Aorta (tissue), 5 donors: ENCODE measurements at regions of chr3 and their contacts with region 1.

Region 1: DNA sequence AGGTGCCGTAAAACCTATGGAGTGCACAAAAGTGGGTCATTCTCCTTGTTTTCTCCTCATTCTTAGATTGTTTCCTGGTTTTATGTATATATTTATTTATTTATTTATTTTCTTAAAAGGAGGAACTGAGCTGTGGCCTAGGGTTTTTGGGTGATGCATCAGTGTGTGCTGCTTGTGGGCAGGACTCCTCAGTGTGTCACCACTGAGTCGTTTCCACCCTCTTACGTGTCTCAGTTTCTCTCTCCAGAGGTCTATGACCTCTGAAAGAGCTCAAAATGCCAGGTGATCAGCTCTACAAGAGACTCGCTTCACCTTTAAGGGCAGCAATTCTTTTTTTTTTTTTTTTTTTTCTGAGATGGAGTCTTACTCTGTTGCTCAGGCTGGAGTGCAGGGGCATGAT is 72.9 kb downstream of the CD200 start:
- DNase-seq: no peak
- ATAC-seq: no peak
- H3K4me3 ChIP-seq: no peak overlapping the region
- H3K27ac ChIP-seq: no peak overlapping the region
- H3K4me1 ChIP-seq: peaks cover 0 to 8% of the 10 kb centered on the region in 2 donors
- H3K27me3 ChIP-seq: no peaks in the 10 kb centered on the region

Region 2: GRCh38 chr3:111803123-111803593 is 602.7 kb before region 1 on chr3:
- intact Hi-C with region 1: no loop called
- DNase-seq: peak; percentile 91 to 92
- ATAC-seq: peak; percentile 87
- H3K4me3 ChIP-seq: no peak overlapping the region
- H3K27ac ChIP-seq: peak overlapping the region in 1 of 2 donors; percentile 27
- H3K4me1 ChIP-seq: peaks cover 0 to 9% of the 10 kb centered on the region in 2 donors
- H3K27me3 ChIP-seq: no peaks in the 10 kb centered on the region

Region 3: GRCh38 chr3:112321867-112322649 is 83.8 kb before region 1 on chr3:
- intact Hi-C with region 1: no loop called
- DNase-seq: no peak
- ATAC-seq: no peak
- H3K4me3 ChIP-seq: no peak overlapping the region
- H3K27ac ChIP-seq: no peak overlapping the region
- H3K4me1 ChIP-seq: no peaks in the 10 kb centered on the region
- H3K27me3 ChIP-seq: no peaks in the 10 kb centered on the region

Region 4: DNA sequence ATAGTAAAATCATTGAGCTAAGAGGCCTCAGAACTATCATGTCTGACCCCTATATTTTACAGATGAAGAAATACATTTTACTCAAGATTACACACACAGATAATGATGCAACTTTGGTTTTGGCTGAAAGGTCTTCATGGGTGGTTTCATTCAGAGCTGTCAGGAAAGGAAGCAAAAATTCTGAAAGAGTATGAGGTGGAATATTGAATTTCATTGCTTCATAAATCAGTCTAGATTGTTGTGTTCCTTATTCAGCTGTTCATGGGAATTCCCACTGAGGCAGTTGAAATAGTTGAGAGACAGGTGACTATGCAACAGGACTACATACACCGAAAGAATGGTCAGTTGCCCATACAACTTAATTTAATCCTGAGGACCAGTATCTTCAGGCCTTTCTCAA is 33.4 kb before region 1 on chr3:
- intact Hi-C with region 1: no loop called
- DNase-seq: no peak
- ATAC-seq: no peak
- H3K4me3 ChIP-seq: no peak overlapping the region
- H3K27ac ChIP-seq: no peak overlapping the region
- H3K4me1 ChIP-seq: peaks cover 0 to 7% of the 10 kb centered on the region in 2 donors
- H3K27me3 ChIP-seq: no peaks in the 10 kb centered on the region

Region 5: DNA sequence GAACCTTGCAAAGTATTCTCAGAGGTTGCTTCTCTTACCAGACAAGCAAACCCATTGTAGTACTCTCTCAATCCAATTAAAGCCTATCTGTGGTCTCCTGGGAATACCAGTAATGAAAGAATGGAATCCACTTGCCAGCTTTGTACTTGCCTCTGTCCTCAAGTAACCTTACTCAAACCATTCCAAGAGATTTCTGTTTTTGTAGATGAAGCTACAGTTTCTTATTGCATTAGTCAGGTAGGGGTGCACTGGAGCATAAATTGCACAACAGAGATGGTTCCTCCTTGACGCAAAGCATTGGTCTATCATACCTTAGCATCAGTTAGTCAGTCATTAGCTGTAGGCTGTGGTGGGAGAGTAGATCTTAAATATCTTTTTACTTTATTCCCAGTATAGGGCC is 40.5 kb after region 1 on chr3:
- intact Hi-C with region 1: loop called in 1 of 2 experiments (anchors 5 kb)
- DNase-seq: no peak
- ATAC-seq: no peak
- H3K4me3 ChIP-seq: no peak overlapping the region
- H3K27ac ChIP-seq: no peak overlapping the region
- H3K4me1 ChIP-seq: peaks cover 0 to 4% of the 10 kb centered on the region in 2 donors
- H3K27me3 ChIP-seq: no peaks in the 10 kb centered on the region

Region 6: DNA sequence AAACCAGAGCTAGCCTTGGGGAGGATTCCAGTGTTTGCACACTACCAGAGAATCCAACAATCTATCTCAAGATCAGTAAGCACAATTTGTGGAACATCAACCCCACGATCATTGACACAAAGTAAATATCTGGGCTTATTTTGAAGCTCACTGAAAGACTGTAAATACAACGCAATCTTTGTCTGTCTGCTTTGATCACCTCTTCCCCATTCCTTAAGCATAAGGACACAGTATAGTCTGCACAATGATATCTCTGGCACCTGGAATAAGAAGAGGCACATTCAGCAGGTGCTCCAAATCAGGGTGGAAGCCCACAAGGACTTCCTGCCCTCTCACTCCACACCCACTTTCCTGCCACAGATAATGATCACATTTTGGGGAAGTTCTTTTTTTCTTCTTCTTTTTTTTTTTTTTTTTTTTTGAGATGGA is 67.4 kb after region 1 on chr3:
- intact Hi-C with region 1: no loop called
- DNase-seq: no peak
- ATAC-seq: no peak
- H3K4me3 ChIP-seq: no peak overlapping the region
- H3K27ac ChIP-seq: no peak overlapping the region
- H3K4me1 ChIP-seq: peaks cover 4 to 12% of the 10 kb centered on the region in 2 donors
- H3K27me3 ChIP-seq: no peaks in the 10 kb centered on the region